Stomach (tissue), 19 donors: ENCODE measurements at regions of chr1 and their contacts with region 1.

Region 1: GRCh38 chr1:41795205-41795762 is 123.4 kb downstream of the HIVEP3 start:
- DNase-seq: no peak
- H3K4me3 ChIP-seq: no peak overlapping the region
- H3K27ac ChIP-seq: no peak overlapping the region
- H3K4me1 ChIP-seq: peaks cover 0 to 17% (median 0%) of the 10 kb centered on the region in 4 donors
- H3K27me3 ChIP-seq: no peaks in the 10 kb centered on the region
- CTCF ChIP-seq: peak in 1 of 7 experiments; percentile 31
- EP300 ChIP-seq: no peak
- POLR2A ChIP-seq: no peak

Region 2: DNA sequence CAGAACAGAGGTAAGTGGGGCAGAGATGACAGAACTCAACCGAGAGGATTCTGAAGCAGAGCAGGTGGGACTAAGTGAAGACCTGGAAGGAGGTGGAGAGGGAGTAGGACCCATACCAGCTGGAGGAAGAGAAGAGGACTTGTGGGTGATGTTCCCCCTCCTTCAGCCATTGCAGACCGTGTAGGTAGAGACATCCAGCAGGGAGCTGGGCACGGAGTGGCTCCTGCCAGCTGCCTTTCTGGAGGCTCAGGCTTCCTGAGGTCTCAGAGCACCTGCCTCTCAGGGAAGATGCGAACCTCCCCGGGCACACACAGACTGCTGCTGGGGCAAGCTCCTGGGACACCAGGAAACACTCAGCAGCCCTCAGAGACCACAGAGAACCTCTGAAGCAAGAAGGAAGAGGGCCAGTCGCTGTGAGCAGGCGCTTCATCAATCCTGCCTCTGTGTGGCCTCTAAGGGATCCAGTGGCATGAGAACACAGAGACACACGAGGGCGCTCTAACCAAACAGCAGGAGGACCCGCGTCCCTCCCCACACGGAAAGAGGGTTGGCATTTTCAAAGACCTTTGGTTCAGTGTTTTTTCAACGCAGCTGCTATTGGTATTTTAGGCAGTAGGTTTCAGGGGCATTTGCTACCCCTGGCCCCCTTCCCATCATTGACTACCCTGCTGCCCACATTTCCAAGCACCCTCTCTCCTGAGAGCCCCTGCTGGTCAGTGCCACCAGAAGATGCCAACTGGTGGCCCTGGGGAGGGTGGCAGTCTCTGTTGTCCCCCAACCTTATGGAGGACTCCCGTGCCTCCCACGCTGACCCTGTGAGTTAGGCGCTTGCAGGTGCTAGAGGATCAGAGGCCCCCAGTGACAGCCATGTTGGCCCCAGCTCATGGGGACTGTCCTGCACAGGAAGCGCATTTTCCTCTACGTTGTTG is 221.2 kb before region 1 on chr1:
- intact Hi-C with region 1: loop called (anchors 5 kb)
- DNase-seq: peak; percentile 85 to 94
- H3K4me3 ChIP-seq: no peak overlapping the region
- H3K27ac ChIP-seq: no peak overlapping the region
- H3K4me1 ChIP-seq: peaks cover 0 to 8% (median 4%) of the 10 kb centered on the region in 4 donors
- H3K27me3 ChIP-seq: no peaks in the 10 kb centered on the region
- CTCF ChIP-seq: peak in 5 of 7 experiments; percentile 63 to 80 (median 74)
- EP300 ChIP-seq: no peak
- POLR2A ChIP-seq: no peak